WTC11 (cell line): ENCODE measurements at regions of chr17 and their contacts with region 1.

Region 1: DNA sequence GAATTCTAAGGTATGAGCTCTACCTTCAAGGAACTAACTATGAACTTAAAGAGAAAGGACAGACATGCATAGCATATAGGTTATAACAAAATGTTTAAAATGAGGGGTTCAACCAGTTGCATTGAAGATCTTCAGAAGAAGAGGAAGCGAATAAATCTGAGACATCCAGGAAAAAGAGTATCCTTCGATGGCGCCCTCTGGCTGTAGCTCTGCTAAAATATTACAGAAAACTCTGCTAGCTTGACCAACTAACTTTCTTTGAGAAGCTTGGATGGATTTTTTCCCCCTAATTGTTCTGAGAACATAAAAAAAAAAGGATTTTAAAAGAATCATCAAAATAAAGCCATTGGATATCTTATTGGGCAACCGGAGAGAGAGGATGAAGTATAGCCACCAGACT is 659.9 kb upstream of the SOX9 start:
- DNase-seq: peak; percentile 24
- ATAC-seq: no peak
- H3K4me3 Mint-ChIP-seq: no peak overlapping the region
- H3K27ac Mint-ChIP-seq: no peak overlapping the region
- H3K4me1 Mint-ChIP-seq: peaks cover 57% of the 10 kb centered on the region
- H3K27me3 Mint-ChIP-seq: peaks cover 7% of the 10 kb centered on the region
- CTCF ChIP-seq: peak; percentile 24; the same call in 1 of the 2 replicates

Region 2: GRCh38 chr17:71118039-71118438 is 342.9 kb before region 1 on chr17:
- CTCF ChIA-PET with region 1: interaction called, 10 read pairs
- POLR2A ChIA-PET with region 1: no interaction called
- DNase-seq: no peak
- ATAC-seq: no peak
- H3K4me3 Mint-ChIP-seq: no peak overlapping the region
- H3K27ac Mint-ChIP-seq: no peak overlapping the region
- H3K4me1 Mint-ChIP-seq: peaks cover 9% of the 10 kb centered on the region
- H3K27me3 Mint-ChIP-seq: no peaks in the 10 kb centered on the region; the same call in 1 of the 2 replicates
- CTCF ChIP-seq: 0 out of 2 replicates have a peak, but pooled peaks have one; percentile 15

Region 3: DNA sequence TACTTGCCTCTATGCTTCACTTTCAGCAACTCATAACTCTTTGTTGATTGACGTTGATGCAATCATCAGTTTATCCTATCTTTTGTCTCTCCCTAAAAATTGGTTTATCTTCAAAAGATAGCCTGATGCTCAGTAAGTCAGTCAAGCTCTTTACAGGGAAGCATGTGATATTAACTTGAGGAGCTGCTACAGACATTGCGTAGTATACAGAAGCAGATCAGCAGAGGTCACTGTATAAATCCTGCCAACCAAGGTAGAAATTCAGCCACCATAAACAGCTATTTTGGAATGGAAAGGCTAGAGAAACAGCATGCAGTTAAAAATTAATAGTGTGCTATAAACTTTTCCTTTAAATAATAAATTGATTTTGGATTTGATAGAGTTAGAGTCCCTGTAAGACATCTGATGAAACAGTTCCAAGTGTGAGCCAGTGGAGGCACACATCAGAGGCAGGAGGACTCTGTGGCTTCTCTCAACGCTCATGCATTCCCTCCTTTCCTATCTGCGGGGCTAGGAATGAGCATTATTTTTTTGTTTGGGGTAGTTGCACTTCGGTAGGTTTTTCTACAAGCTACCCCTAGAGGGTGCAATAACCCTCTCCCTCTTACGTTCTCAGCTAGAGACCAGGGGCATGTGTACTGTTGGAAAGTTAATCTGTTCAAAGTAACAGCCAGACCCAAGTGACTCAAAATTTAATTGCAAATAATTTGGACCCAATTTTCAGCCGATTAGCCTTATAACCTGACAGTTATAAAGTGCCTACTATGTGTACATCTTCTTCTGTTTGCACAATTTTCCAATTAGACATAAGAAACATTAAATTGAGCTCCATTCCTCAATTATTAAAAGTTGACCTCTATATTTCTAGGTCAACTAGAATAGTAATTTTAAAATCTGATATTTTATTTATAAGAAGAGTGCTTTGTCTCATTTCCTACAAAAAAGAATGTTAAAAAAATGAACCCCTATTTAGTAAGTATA is 12.2 kb after region 1 on chr17:
- CTCF ChIA-PET with region 1: interaction called, 26 read pairs
- POLR2A ChIA-PET with region 1: no interaction called
- DNase-seq: peak; percentile 11
- ATAC-seq: peak; percentile 95
- H3K4me3 Mint-ChIP-seq: no peak overlapping the region
- H3K27ac Mint-ChIP-seq: no peak overlapping the region
- H3K4me1 Mint-ChIP-seq: peaks cover 6% of the 10 kb centered on the region; the same call in 1 of the 2 replicates
- H3K27me3 Mint-ChIP-seq: no peaks in the 10 kb centered on the region
- CTCF ChIP-seq: peak; percentile 66